Activated CD8-positive, alpha-beta T cell treated with anti-CD3 and anti-CD28 coated beads, Interleukin-2, amount 10 ng/mL, durations not matched to agents 7 days and 5 days (primary cell): ENCODE measurements at regions of chr15 and their contacts with region 1.

Region 1: DNA sequence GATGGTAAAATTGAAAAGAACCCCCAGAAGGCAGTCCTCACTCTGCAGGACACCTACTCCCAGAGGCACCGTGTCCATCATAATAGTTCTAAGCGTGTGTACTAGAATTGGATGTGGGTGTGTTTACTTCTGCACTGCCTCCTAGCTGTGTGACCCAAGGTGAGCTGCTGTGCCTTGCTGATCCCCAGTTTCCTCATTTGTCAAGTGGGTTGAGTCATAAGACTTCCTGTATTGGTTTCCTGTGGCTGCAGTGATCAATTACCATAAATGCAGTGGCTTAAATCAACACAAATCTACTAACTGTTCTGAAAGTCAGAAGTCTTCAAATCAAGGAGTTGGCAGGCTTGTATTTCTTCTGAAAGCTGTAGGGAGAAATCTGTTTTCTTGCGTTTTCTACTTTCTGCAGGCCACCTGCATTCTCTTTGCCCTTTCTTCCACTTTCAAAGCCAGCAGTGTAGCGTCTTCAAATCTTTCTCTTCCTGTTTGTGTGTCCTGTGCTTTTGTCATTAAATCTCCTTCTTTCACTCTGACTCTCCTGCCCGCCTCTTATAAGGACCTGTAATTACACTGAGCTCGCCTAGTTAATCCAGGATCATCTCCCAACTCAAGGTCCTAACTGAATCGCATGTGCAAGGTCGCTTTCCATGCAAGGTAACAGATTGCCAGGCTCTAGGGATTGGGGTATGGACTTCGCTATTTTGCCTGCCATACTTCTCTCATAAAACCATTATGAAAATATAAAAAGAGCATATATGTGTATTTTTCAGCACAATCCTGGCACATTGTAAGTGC is 59.0 kb downstream of the RORA start:
- DNase-seq: peak; percentile 50
- ATAC-seq: peak; percentile 78
- H3K4me3 Mint-ChIP-seq: peak overlapping the region; percentile 40
- H3K27ac Mint-ChIP-seq: peak overlapping the region; percentile 79
- H3K4me1 Mint-ChIP-seq: peaks cover 20% of the 10 kb centered on the region
- H3K27me3 Mint-ChIP-seq: peaks cover 11% of the 10 kb centered on the region

Region 2: GRCh38 chr15:61025308-61025707 is 144.8 kb before region 1 on chr15:
- CTCF ChIA-PET with region 1: no interaction called
- POLR2A ChIA-PET with region 1: no interaction called
- DNase-seq: no peak
- ATAC-seq: no peak
- H3K4me3 Mint-ChIP-seq: no peak overlapping the region
- H3K27ac Mint-ChIP-seq: no peak overlapping the region
- H3K4me1 Mint-ChIP-seq: no peaks in the 10 kb centered on the region
- H3K27me3 Mint-ChIP-seq: peaks cover 7% of the 10 kb centered on the region

Region 3: GRCh38 chr15:61184431-61184830 is 14.3 kb after region 1 on chr15:
- CTCF ChIA-PET with region 1: interaction called, 13 read pairs
- POLR2A ChIA-PET with region 1: no interaction called
- DNase-seq: no peak
- ATAC-seq: no peak
- H3K4me3 Mint-ChIP-seq: no peak overlapping the region
- H3K27ac Mint-ChIP-seq: no peak overlapping the region
- H3K4me1 Mint-ChIP-seq: no peaks in the 10 kb centered on the region
- H3K27me3 Mint-ChIP-seq: peaks cover 30% of the 10 kb centered on the region